ENCODE measurements at regions of chr1 and their contacts with region 1.

Region 1: GRCh38 chr1:46036894-46037839 is 95.3 kb downstream of the PIK3R3 start:
- DNase-seq: peak; percentile 86
- H3K4me3 Mint-ChIP-seq: no peak overlapping the region
- H3K27ac Mint-ChIP-seq: no peak overlapping the region
- H3K4me1 Mint-ChIP-seq: no peaks in the 10 kb centered on the region
- H3K27me3 Mint-ChIP-seq: no peaks in the 10 kb centered on the region

Region 2: GRCh38 chr1:46057781-46058180 is 20.6 kb after region 1 on chr1:
- CTCF ChIA-PET with region 1: no interaction called
- POLR2A ChIA-PET with region 1: no interaction called
- DNase-seq: no peak
- H3K4me3 Mint-ChIP-seq: no peak overlapping the region
- H3K27ac Mint-ChIP-seq: no peak overlapping the region
- H3K4me1 Mint-ChIP-seq: peaks cover 11% of the 10 kb centered on the region
- H3K27me3 Mint-ChIP-seq: no peaks in the 10 kb centered on the region

Region 3: DNA sequence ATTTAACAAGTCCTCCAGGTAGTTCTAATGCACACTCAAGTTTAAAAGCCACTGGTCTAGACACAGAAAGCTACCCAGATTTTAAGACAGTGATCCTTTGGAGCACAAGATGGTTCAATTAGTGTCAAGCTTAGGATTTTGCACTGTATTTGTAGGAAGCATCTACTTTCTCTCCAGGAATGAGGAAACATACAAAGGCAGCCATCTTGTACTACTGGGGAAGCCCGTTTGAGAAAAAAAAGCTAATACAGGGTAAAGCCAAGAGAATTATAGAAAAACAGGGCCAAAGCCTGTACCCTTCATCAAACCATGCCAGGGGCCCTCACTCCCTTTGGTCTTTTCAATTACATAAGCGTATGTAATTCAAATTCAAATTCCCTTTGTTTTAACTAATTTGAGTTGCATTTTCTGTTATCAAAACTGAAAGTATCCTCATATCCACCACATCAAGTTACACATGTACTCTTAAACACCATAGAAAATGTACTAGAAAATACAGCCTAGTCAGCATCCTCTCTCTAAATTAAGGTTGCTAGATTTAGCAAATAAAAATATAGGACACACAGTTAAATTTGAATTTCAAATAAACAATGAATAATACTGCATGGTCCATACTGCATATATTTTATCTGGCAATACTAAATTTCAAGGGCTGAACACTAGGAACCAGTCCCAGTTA is 77.9 kb after region 1 on chr1:
- CTCF ChIA-PET with region 1: no interaction called
- POLR2A ChIA-PET with region 1: no interaction called
- DNase-seq: no peak
- H3K4me3 Mint-ChIP-seq: no peak overlapping the region
- H3K27ac Mint-ChIP-seq: no peak overlapping the region
- H3K4me1 Mint-ChIP-seq: peaks cover 6% of the 10 kb centered on the region
- H3K27me3 Mint-ChIP-seq: peaks cover 2% of the 10 kb centered on the region

Region 4: DNA sequence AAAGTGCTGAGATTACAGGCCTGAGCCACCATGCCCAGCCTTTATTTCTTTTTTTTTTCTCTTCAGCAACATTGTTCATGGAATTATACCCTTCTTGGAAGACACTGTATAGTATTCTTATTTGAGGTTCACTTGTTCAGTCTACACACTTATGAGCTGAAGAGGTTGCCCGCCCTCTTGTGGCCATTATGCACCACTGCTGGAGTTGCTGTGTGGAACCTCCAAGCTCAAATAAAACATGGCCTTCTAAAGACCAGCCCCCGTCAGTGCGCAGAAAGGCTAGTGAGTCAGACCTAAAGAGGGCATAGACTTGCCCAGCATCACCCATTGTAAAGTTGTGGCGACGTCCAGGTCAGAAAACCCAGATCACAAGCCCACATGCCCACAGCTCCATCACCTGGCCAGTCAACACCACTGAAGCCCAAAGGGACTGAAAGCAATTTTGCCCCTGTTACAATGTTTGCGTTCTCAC is 186.3 kb after region 1 on chr1:
- CTCF ChIA-PET with region 1: interaction called, 19 read pairs
- POLR2A ChIA-PET with region 1: no interaction called
- DNase-seq: peak; percentile 71
- H3K4me3 Mint-ChIP-seq: no peak overlapping the region
- H3K27ac Mint-ChIP-seq: no peak overlapping the region
- H3K4me1 Mint-ChIP-seq: peaks cover 4% of the 10 kb centered on the region
- H3K27me3 Mint-ChIP-seq: no peaks in the 10 kb centered on the region

Measured in activated CD4-positive, alpha-beta T cell treated with anti-CD3 and anti-CD28 coated beads, Interleukin-2, amount 10 ng/mL, durations not matched to agents 7 days and 5 days (primary cell).